ENCODE measurements at regions of chr4 and their contacts with region 1.

Region 1: DNA sequence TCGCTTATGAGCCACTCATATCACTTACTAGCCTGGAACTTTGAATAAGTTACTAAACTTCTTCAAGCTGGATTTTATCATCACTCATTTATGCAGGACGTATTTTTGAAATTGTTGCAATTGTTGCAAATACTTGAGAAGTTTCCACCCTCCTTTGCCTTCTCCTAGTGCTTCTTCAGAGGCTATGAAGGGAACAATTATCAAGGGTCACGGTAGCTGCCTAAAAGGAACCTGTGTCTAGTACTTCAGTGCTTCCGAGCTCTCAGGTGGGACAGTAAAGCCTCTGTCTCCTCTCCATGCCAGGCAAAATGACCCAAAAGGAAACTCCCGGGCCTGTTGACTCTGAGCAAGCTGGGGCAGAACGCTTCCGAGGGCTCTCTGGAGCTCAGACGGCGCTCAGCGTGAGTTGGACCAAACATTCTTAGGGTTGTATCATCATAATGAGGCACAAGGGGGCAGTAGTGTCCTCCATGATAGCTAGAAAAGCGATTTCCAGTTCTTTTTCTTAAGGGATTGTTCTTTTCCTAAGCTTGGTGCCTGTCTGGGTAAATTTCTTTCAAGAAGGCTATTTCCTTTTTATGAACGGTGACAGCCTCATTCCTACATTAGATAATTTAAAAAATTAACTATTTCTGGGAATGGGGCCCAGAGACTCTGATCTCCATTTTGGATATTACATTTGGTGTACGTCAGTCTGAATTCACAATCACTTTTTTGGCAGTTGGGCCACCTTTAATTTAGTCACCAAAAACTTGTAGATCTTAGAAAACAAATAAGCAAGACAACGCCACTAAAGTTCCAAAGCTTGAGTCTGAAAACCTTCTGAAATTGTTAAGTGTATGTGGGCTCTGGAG is 73.1 kb downstream of the PACRGL start:
- DNase-seq: peak; percentile 82
- H3K4me3 ChIP-seq: 0 out of 2 replicates have a peak overlapping the region, but pooled peaks have one; percentile 11
- H3K27ac ChIP-seq: no peak overlapping the region
- H3K4me1 ChIP-seq: no peaks in the 10 kb centered on the region
- H3K27me3 ChIP-seq: no peaks in the 10 kb centered on the region

Region 2: GRCh38 chr4:21134994-21135393 is 361.6 kb after region 1 on chr4:
- in situ Hi-C with region 1: loop called (anchors 25 kb)
- DNase-seq: peak; percentile 61
- H3K4me3 ChIP-seq: no peak overlapping the region
- H3K27ac ChIP-seq: no peak overlapping the region
- H3K4me1 ChIP-seq: no peaks in the 10 kb centered on the region
- H3K27me3 ChIP-seq: no peaks in the 10 kb centered on the region